ENCODE measurements at regions of chr5 and their contacts with region 1.

Region 1: GRCh38 chr5:73419465-73420390 is 28.8 kb downstream of the FOXD1 start:
- DNase-seq: peak in 1 of 2 donors; percentile 80
- H3K4me3 ChIP-seq: peak overlapping the region; percentile 49 to 67
- H3K27ac ChIP-seq: peak overlapping the region; percentile 60 to 74
- H3K4me1 ChIP-seq: peaks cover 9 to 13% of the 10 kb centered on the region in 2 donors
- H3K27me3 ChIP-seq: no peaks in the 10 kb centered on the region
- CTCF ChIP-seq: no peak

Region 2: DNA sequence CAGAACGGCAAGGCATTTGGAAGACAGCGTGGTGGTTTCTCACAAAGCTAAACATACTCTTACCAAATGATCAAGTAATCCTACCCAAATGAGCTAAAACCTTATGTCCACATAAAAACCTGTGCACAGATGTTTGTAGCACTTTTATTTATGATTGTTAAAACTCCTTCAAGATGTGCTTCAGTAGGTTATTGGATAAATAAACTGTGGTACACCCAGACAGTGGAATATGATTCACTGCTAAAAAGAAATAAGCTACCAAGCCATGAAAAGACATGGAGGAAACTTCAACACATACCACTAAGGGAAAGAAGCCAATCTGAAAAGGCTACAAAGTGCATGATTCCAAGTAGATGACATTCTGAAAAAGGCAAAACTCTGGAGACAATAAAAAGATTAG is 65.3 kb before region 1 on chr5:
- intact Hi-C with region 1: no loop called
- DNase-seq: no peak
- H3K4me3 ChIP-seq: no peak overlapping the region
- H3K27ac ChIP-seq: no peak overlapping the region
- H3K4me1 ChIP-seq: peaks cover 0 to 3% of the 10 kb centered on the region in 2 donors
- H3K27me3 ChIP-seq: no peaks in the 10 kb centered on the region
- CTCF ChIP-seq: no peak

Region 3: GRCh38 chr5:73370640-73371583 is 48.8 kb before region 1 on chr5:
- intact Hi-C with region 1: no loop called
- DNase-seq: no peak
- H3K4me3 ChIP-seq: no peak overlapping the region
- H3K27ac ChIP-seq: no peak overlapping the region
- H3K4me1 ChIP-seq: no peaks in the 10 kb centered on the region
- H3K27me3 ChIP-seq: no peaks in the 10 kb centered on the region
- CTCF ChIP-seq: no peak

Region 4: GRCh38 chr5:73437101-73437776 is 17.5 kb after region 1 on chr5:
- intact Hi-C with region 1: loop called (anchors 2 kb)
- DNase-seq: peak in 1 of 2 donors; percentile 79
- H3K4me3 ChIP-seq: peak overlapping the region; percentile 44 to 61
- H3K27ac ChIP-seq: peak overlapping the region; percentile 86
- H3K4me1 ChIP-seq: peaks cover 4 to 17% of the 10 kb centered on the region in 2 donors
- H3K27me3 ChIP-seq: no peaks in the 10 kb centered on the region
- CTCF ChIP-seq: peak; percentile 30 to 77 (median 59)

Region 5: GRCh38 chr5:73565139-73565968 is 145.6 kb after region 1 on chr5 and contains the starts of genes ANKRA2 and UTP15:
- intact Hi-C with region 1: no loop called
- DNase-seq: peak; percentile 94 to 99
- H3K4me3 ChIP-seq: peak within 1 kb of the TSS; percentile 76 to 86
- H3K27ac ChIP-seq: peak within 1 kb of the TSS; percentile 90 to 94
- H3K4me1 ChIP-seq: peaks cover 0 to 19% of the 10 kb centered on the region in 2 donors
- H3K27me3 ChIP-seq: no peaks in the 10 kb centered on the region
- CTCF ChIP-seq: no peak
- total RNA-seq, gene ANKRA2: 6.9 TPM
- total RNA-seq, gene UTP15: 4.9 TPM

Measured in ascending aorta (tissue), 2 donors.